ENCODE measurements at regions of chr3 and their contacts with region 1.

Region 1: GRCh38 chr3:170162630-170163029 is 18.9 kb downstream of the PHC3 start:
- DNase-seq: no peak
- ATAC-seq: no peak
- H3K4me3 ChIP-seq: no peak overlapping the region
- H3K4me3 Mint-ChIP-seq: no peak overlapping the region
- H3K27ac ChIP-seq: peak overlapping the region in 1 of 2 donors; percentile 74
- H3K27ac Mint-ChIP-seq: peak overlapping the region; percentile 51
- H3K4me1 ChIP-seq: peaks cover 20 to 24% of the 10 kb centered on the region in 2 donors
- H3K4me1 Mint-ChIP-seq: peaks cover 54% of the 10 kb centered on the region
- H3K27me3 ChIP-seq: no peaks in the 10 kb centered on the region
- H3K27me3 Mint-ChIP-seq: no peaks in the 10 kb centered on the region
- CTCF ChIP-seq: no peak

Region 2: DNA sequence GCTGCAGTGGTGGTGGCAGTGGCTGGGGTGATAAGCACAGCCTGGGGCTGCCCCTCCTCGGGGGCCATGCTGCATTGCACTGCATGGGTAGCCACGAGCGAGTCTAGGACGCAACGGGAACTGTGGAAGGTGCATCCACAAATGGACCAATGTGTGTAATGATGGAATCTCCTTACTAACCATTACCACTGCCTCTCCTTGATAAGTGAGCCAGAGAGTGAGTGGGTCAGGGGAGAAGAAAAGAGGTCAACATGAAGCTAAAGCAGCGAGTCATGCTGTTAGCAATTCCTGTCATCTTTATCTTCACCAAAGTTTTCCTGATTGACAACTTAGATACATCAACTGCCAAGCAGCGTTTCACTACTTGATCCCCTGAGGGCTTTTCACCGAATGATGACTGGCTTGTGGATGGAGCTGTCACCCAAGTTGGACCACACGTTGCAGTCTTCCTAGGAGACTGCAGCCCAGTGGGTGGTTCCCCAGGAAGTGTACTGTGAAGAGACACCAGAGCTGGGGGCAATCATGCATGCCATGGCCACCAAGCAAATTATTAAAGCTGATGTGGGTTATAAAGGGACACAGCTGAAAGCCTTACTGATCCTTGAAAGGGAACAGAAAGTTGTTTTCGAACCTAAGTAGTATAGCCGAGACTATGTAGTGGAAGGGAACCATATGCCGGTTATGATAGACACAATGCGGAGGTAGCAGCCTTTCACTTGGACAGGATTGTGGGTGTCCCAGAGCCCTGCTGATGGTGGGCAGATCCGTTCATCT is 230.7 kb before region 1 on chr3:
- CTCF ChIA-PET with region 1: no interaction called
- POLR2A ChIA-PET with region 1: no interaction called
- intact Hi-C with region 1: no loop called
- DNase-seq: peak; percentile 89
- ATAC-seq: peak; percentile 83
- H3K4me3 ChIP-seq: peak overlapping the region in 4 of 5 experiments; percentile 7 to 54 (median 34)
- H3K4me3 Mint-ChIP-seq: peak overlapping the region; percentile 82
- H3K27ac ChIP-seq: peak overlapping the region; percentile 83 to 86
- H3K27ac Mint-ChIP-seq: peak overlapping the region; percentile 97
- H3K4me1 ChIP-seq: peaks cover 49 to 53% of the 10 kb centered on the region in 2 donors
- H3K4me1 Mint-ChIP-seq: peaks cover 55% of the 10 kb centered on the region
- H3K27me3 ChIP-seq: no peaks in the 10 kb centered on the region
- H3K27me3 Mint-ChIP-seq: no peaks in the 10 kb centered on the region
- CTCF ChIP-seq: no peak

Region 3: GRCh38 chr3:170128977-170129431 is 33.6 kb before region 1 on chr3:
- CTCF ChIA-PET with region 1: no interaction called
- POLR2A ChIA-PET with region 1: no interaction called
- intact Hi-C with region 1: loop called (anchors 5 kb)
- DNase-seq: no peak
- ATAC-seq: peak; percentile 49
- H3K4me3 ChIP-seq: peak overlapping the region in 1 of 5 experiments; percentile 1
- H3K4me3 Mint-ChIP-seq: peak overlapping the region; percentile 67
- H3K27ac ChIP-seq: peak overlapping the region; percentile 27 to 52
- H3K27ac Mint-ChIP-seq: peak overlapping the region; percentile 86
- H3K4me1 ChIP-seq: peaks cover 16 to 17% of the 10 kb centered on the region in 2 donors
- H3K4me1 Mint-ChIP-seq: peaks cover 17% of the 10 kb centered on the region
- H3K27me3 ChIP-seq: no peaks in the 10 kb centered on the region
- H3K27me3 Mint-ChIP-seq: no peaks in the 10 kb centered on the region
- CTCF ChIP-seq: no peak

Region 4: GRCh38 chr3:170357176-170357919 is 194.7 kb after region 1 on chr3 and contains the start of gene SKIL:
- CTCF ChIA-PET with region 1: no interaction called
- POLR2A ChIA-PET with region 1: no interaction called
- intact Hi-C with region 1: no loop called
- DNase-seq: peak; percentile 99
- ATAC-seq: peak; percentile 56
- H3K4me3 ChIP-seq: peak within 1 kb of the TSS; percentile 70 to 90 (median 82)
- H3K4me3 Mint-ChIP-seq: peak within 1 kb of the TSS; percentile 91
- H3K27ac ChIP-seq: peak within 1 kb of the TSS; percentile 93 to 100
- H3K27ac Mint-ChIP-seq: peak within 1 kb of the TSS; percentile 99
- H3K4me1 ChIP-seq: peaks cover 70 to 71% of the 10 kb centered on the region in 2 donors
- H3K4me1 Mint-ChIP-seq: peaks cover 72% of the 10 kb centered on the region
- H3K27me3 ChIP-seq: no peaks in the 10 kb centered on the region
- H3K27me3 Mint-ChIP-seq: no peaks in the 10 kb centered on the region
- CTCF ChIP-seq: no peak
- total RNA-seq, gene SKIL: 145 and 148 TPM in 2 replicates

Region 5: DNA sequence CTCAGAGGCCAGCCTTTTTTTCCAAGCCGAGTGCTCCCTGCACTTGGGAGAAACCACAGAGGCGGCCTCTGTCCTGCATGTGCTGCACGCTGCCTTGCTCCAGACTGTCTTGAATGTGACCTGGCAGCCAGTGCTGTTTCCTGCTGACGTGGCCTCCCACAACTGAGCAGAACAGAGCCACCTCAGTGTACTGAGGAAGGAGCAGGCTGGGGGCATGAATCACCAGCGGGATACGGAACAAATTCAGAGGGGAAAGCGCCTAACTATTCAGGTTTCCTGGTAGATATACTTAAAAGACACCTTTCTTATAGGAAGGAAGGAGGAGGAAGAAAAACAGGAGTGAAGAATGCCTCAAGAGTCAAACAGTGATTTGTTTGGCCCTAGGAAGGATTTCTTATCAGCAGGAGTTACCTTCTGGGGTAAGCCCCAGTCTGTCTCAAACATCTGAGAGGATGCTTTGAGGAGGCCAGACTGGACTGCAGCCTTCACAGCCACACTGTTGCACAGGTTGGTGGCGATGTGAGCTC is 1990.8 kb after region 1 on chr3:
- CTCF ChIA-PET with region 1: no interaction called
- POLR2A ChIA-PET with region 1: no interaction called
- intact Hi-C with region 1: no loop called
- DNase-seq: no peak
- ATAC-seq: no peak
- H3K4me3 ChIP-seq: no peak overlapping the region
- H3K4me3 Mint-ChIP-seq: no peak overlapping the region
- H3K27ac ChIP-seq: no peak overlapping the region
- H3K27ac Mint-ChIP-seq: no peak overlapping the region
- H3K4me1 ChIP-seq: no peaks in the 10 kb centered on the region
- H3K4me1 Mint-ChIP-seq: peaks cover 3% of the 10 kb centered on the region
- H3K27me3 ChIP-seq: no peaks in the 10 kb centered on the region
- H3K27me3 Mint-ChIP-seq: peaks cover 19% of the 10 kb centered on the region
- CTCF ChIP-seq: no peak